ENCODE measurements at regions of chr17 and their contacts with region 1.

Region 1: GRCh38 chr17:75456417-75457046 is at the start of gene TMEM94:
- DNase-seq: peak; percentile 90 to 94 (median 92)
- H3K4me3 ChIP-seq: peak within 1 kb of the TSS; percentile 94 to 95
- H3K4me3 Mint-ChIP-seq: peak within 1 kb of the TSS; percentile 93 to 99 (median 95)
- H3K27ac ChIP-seq: peak within 1 kb of the TSS; percentile 67
- H3K27ac Mint-ChIP-seq: peak within 1 kb of the TSS; percentile 90 to 98 (median 96)
- H3K4me1 ChIP-seq: peaks cover 18% of the 10 kb centered on the region
- H3K4me1 Mint-ChIP-seq: peaks cover 20 to 35% (median 30%) of the 10 kb centered on the region in 4 donors
- H3K27me3 ChIP-seq: no peaks in the 10 kb centered on the region
- H3K27me3 Mint-ChIP-seq: no peaks in the 10 kb centered on the region
- total RNA-seq, gene TMEM94: 109 TPM

Region 2: GRCh38 chr17:75440738-75441448 is 15.6 kb before region 1 on chr17:
- CTCF ChIA-PET with region 1: no interaction called
- POLR2A ChIA-PET with region 1: no interaction called
- intact Hi-C with region 1: no loop called
- DNase-seq: no peak
- H3K4me3 ChIP-seq: no peak overlapping the region
- H3K4me3 Mint-ChIP-seq: no peak overlapping the region
- H3K27ac ChIP-seq: no peak overlapping the region
- H3K27ac Mint-ChIP-seq: peak overlapping the region in 3 of 7 donors; percentile 16 to 68 (median 61)
- H3K4me1 ChIP-seq: peaks cover 6% of the 10 kb centered on the region
- H3K4me1 Mint-ChIP-seq: peaks cover 7 to 10% (median 10%) of the 10 kb centered on the region in 4 donors
- H3K27me3 ChIP-seq: no peaks in the 10 kb centered on the region
- H3K27me3 Mint-ChIP-seq: no peaks in the 10 kb centered on the region

Region 3: DNA sequence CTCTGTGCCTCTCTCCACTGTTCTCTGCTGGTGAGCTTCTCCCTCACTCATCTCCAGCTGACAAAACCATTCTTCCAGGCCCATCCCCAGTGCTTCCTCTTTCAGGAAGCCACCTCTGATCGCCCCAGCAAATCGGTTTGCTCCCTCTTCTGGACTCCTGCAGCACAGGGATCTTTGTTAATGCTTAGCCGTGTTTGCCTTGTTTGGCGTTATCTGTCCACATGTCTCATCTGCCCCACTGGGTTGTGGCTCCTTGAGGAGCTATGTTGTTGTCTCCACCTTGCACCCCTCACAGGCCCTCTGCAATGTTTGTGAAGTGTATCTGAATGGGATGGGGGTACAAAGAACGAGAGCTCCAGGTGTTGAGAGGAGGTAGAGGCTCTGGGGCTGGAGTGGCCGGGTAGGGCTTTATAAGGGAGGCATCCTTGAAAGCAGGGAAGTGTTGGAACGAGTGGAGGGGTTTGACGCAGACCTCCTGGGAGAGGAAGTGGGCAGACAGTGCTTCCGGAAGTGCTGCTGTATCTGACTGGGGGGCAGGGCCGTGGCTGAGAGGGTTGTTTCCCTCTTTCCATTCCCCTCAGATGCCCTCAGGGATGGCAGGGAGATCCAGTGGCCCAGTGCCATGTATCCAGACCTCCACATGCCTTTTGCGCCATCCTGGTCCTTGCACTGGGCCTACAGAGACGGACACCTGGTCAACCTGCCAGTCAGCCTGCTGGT is 31.0 kb after region 1 on chr17:
- CTCF ChIA-PET with region 1: interaction called, 4 read pairs
- POLR2A ChIA-PET with region 1: interaction called, 25 read pairs
- intact Hi-C with region 1: no loop called
- DNase-seq: peak; percentile 37 to 52 (median 47)
- H3K4me3 ChIP-seq: peak overlapping the region in 1 of 2 donors; percentile 38
- H3K4me3 Mint-ChIP-seq: peak overlapping the region; percentile 50 to 88 (median 73)
- H3K27ac ChIP-seq: peak overlapping the region; percentile 22
- H3K27ac Mint-ChIP-seq: peak overlapping the region; percentile 84 to 99 (median 94)
- H3K4me1 ChIP-seq: peaks cover 21% of the 10 kb centered on the region
- H3K4me1 Mint-ChIP-seq: peaks cover 17 to 30% (median 26%) of the 10 kb centered on the region in 4 donors
- H3K27me3 ChIP-seq: no peaks in the 10 kb centered on the region
- H3K27me3 Mint-ChIP-seq: no peaks in the 10 kb centered on the region

Region 4: DNA sequence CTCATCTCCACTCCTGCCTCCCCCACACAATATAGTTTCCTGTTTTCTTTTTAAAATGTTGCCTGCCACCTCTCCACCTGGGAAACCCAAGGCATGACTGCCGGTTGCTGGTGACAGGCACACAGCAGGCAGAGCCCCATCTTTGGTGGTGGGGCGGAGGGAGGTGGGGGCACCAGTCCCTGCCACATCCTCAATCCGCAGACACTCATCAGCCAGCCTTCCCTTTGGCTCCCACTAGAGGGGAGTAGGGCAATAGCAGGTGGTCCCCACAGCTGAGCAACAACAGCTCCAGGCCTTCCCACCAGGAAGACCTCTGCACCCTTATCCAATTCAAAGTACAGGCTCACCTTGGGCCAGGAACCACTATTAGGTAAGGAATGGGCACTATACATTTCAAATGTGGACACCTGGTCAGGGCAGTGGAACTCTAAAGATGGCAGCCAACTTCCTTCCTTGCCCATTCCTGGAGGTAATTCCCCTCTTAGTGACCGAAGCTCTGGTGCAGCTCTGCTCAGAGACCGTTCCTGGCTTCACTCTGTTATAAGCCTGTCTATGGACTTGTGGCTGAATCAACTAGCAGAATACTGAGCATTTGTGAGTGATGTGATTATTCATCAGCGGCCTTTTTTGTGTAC is 196.5 kb after region 1 on chr17:
- CTCF ChIA-PET with region 1: no interaction called
- POLR2A ChIA-PET with region 1: no interaction called
- intact Hi-C with region 1: no loop called
- DNase-seq: peak in 1 of 5 donors; percentile 7
- H3K4me3 ChIP-seq: no peak overlapping the region
- H3K4me3 Mint-ChIP-seq: no peak overlapping the region
- H3K27ac ChIP-seq: no peak overlapping the region
- H3K27ac Mint-ChIP-seq: peak overlapping the region in 1 of 7 donors; percentile 18
- H3K4me1 ChIP-seq: no peaks in the 10 kb centered on the region
- H3K4me1 Mint-ChIP-seq: peaks cover 0 to 2% (median 0%) of the 10 kb centered on the region in 4 donors
- H3K27me3 ChIP-seq: no peaks in the 10 kb centered on the region
- H3K27me3 Mint-ChIP-seq: no peaks in the 10 kb centered on the region

Measured in CD4-positive, alpha-beta memory T cell (primary cell).